Naive thymus-derived CD4-positive, alpha-beta T cell (primary cell): ENCODE measurements at regions of chr10 and their contacts with region 1.

Region 1: GRCh38 chr10:114550756-114551635 is 107.1 kb downstream of the ABLIM1 start:
- DNase-seq: peak in 5 of 9 donors; percentile 33 to 50 (median 40)
- ATAC-seq: peak; percentile 26
- H3K4me3 ChIP-seq: no peak overlapping the region
- H3K4me3 Mint-ChIP-seq: no peak overlapping the region
- H3K27ac ChIP-seq: no peak overlapping the region
- H3K27ac Mint-ChIP-seq: peak overlapping the region in 5 of 9 donors; percentile 1 to 61 (median 20)
- H3K4me1 ChIP-seq: peaks cover 6 to 29% of the 10 kb centered on the region in 2 donors
- H3K4me1 Mint-ChIP-seq: peaks cover 16 to 37% (median 33%) of the 10 kb centered on the region in 7 donors
- H3K27me3 ChIP-seq: no peaks in the 10 kb centered on the region
- H3K27me3 Mint-ChIP-seq: peaks cover 0 to 5% (median 0%) of the 10 kb centered on the region in 5 donors

Region 2: GRCh38 chr10:114337505-114338462 is 213.2 kb before region 1 on chr10:
- CTCF ChIA-PET with region 1: no interaction called
- POLR2A ChIA-PET with region 1: no interaction called
- intact Hi-C with region 1: no loop called
- DNase-seq: no peak
- ATAC-seq: peak; percentile 29
- H3K4me3 ChIP-seq: no peak overlapping the region
- H3K4me3 Mint-ChIP-seq: no peak overlapping the region
- H3K27ac ChIP-seq: no peak overlapping the region
- H3K27ac Mint-ChIP-seq: no peak overlapping the region
- H3K4me1 ChIP-seq: no peaks in the 10 kb centered on the region
- H3K4me1 Mint-ChIP-seq: peaks cover 0 to 31% (median 0%) of the 10 kb centered on the region in 7 donors
- H3K27me3 ChIP-seq: no peaks in the 10 kb centered on the region
- H3K27me3 Mint-ChIP-seq: peaks cover 0 to 6% (median 0%) of the 10 kb centered on the region in 5 donors

Region 3: DNA sequence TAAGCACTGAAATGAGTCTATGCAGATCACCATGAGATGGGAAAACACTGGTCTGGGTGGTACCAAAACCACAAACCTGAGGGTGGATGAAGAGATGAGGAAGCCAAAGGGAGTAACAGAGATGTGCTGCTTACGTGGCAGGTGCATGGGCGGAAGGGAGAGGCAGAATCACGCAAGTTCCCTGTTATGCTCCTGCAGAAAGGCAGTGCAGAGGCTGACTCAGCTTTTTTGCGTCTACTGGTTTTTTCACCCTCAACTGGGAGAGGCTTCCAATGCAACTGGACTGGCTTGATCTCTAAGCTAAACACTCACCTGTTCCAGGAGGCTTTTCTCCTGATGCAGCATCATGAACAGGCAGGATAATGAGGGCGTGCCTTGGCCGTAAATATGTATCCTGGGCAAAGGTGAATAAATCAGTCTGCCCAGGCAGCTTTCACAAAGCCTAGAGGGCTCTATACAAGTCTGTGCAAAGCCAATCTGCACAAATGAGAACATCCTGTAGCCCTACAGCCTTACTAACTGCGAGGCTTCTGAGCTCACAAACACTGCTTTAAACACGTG is 51.3 kb before region 1 on chr10:
- CTCF ChIA-PET with region 1: interaction called, 7 read pairs
- POLR2A ChIA-PET with region 1: interaction called, 13 read pairs
- intact Hi-C with region 1: no loop called
- DNase-seq: peak in 8 of 9 donors; percentile 53 to 73 (median 67)
- ATAC-seq: peak; percentile 66
- H3K4me3 ChIP-seq: peak overlapping the region; percentile 2
- H3K4me3 Mint-ChIP-seq: peak overlapping the region; percentile 69 to 79 (median 74)
- H3K27ac ChIP-seq: peak overlapping the region; percentile 78
- H3K27ac Mint-ChIP-seq: peak overlapping the region; percentile 74 to 96 (median 93)
- H3K4me1 ChIP-seq: peaks cover 12 to 81% of the 10 kb centered on the region in 2 donors
- H3K4me1 Mint-ChIP-seq: peaks cover 57 to 100% (median 93%) of the 10 kb centered on the region in 7 donors
- H3K27me3 ChIP-seq: no peaks in the 10 kb centered on the region
- H3K27me3 Mint-ChIP-seq: no peaks in the 10 kb centered on the region

Region 4: DNA sequence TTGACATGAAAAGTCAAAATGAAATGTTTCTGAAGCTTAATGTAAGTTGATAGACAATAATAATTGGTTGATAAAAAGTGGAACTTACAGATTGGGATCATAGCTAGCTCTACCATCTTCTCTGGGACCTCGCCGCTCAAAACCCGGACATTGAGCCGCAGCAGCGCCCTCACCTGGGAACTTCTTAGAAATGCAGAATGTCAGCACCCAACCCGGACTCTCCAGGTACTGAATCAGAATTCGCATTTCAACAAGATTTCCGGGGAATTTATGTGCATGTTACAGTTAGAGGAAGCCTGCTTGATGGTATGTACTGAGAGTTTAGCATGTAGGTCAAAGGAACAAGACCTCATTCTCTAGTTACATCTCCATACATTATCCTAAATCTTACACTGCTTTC is 143.8 kb after region 1 on chr10:
- CTCF ChIA-PET with region 1: interaction called, 6 read pairs
- POLR2A ChIA-PET with region 1: no interaction called
- intact Hi-C with region 1: loop called (anchors 1 to 2 kb)
- DNase-seq: peak in 3 of 9 donors; percentile 4 to 21 (median 13)
- ATAC-seq: no peak
- H3K4me3 ChIP-seq: no peak overlapping the region
- H3K4me3 Mint-ChIP-seq: no peak overlapping the region
- H3K27ac ChIP-seq: no peak overlapping the region
- H3K27ac Mint-ChIP-seq: no peak overlapping the region
- H3K4me1 ChIP-seq: peaks cover 0 to 9% of the 10 kb centered on the region in 2 donors
- H3K4me1 Mint-ChIP-seq: peaks cover 6 to 11% (median 9%) of the 10 kb centered on the region in 7 donors
- H3K27me3 ChIP-seq: no peaks in the 10 kb centered on the region
- H3K27me3 Mint-ChIP-seq: peaks cover 10 to 32% (median 19%) of the 10 kb centered on the region in 5 donors

Region 5: GRCh38 chr10:114703377-114704107 is 152.5 kb after region 1 on chr10:
- CTCF ChIA-PET with region 1: no interaction called
- POLR2A ChIA-PET with region 1: interaction called, 3 read pairs
- intact Hi-C with region 1: loop called (anchors 1 kb)
- DNase-seq: peak in 7 of 9 donors; percentile 6 to 46 (median 24)
- ATAC-seq: peak; percentile 67
- H3K4me3 ChIP-seq: no peak overlapping the region
- H3K4me3 Mint-ChIP-seq: no peak overlapping the region
- H3K27ac ChIP-seq: no peak overlapping the region
- H3K27ac Mint-ChIP-seq: no peak overlapping the region
- H3K4me1 ChIP-seq: no peaks in the 10 kb centered on the region
- H3K4me1 Mint-ChIP-seq: no peaks in the 10 kb centered on the region
- H3K27me3 ChIP-seq: no peaks in the 10 kb centered on the region
- H3K27me3 Mint-ChIP-seq: peaks cover 0 to 45% (median 9%) of the 10 kb centered on the region in 5 donors

Region 6: DNA sequence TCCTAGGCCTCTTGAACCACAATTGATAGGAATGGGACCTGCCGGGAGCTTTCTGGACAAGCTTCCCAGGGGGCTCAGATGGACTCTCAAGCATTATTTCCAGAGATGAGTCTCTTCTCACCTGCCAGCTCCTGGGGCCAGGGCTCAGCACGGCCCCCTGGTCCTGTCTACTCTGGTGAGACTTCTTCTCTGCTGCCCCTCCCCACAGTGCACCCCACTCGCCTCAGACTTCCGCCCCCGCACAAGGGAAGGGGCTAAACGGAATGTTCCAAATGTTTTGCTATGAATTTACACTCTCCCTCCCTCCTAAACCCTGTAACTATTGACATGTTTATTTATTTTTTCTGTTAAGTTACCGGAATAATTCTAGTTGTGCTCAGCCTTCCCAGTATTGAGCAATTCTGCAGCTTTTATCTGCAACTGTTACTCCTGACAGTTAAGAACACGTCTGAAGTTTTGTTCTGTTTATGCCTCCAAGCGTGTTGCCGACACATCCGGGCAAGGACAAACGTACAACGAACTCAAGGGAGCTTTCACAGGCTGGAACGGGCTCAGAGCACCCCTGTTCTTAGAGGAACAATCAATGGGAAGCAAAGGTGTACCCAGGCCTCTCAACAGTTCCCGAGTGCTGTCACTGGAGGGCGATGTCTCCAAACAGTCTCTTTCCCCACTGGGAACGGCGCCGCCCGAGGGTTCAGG is 325.8 kb after region 1 on chr10:
- CTCF ChIA-PET with region 1: no interaction called
- POLR2A ChIA-PET with region 1: no interaction called
- intact Hi-C with region 1: loop called in 1 of 2 experiments (anchors 1 kb)
- DNase-seq: peak in 2 of 9 donors; percentile 2 to 55
- ATAC-seq: peak; percentile 63
- H3K4me3 ChIP-seq: no peak overlapping the region
- H3K4me3 Mint-ChIP-seq: no peak overlapping the region
- H3K27ac ChIP-seq: no peak overlapping the region
- H3K27ac Mint-ChIP-seq: no peak overlapping the region
- H3K4me1 ChIP-seq: no peaks in the 10 kb centered on the region
- H3K4me1 Mint-ChIP-seq: peaks cover 0 to 30% (median 12%) of the 10 kb centered on the region in 7 donors
- H3K27me3 ChIP-seq: peaks cover 0 to 5% of the 10 kb centered on the region in 2 donors
- H3K27me3 Mint-ChIP-seq: peaks cover 36 to 76% (median 44%) of the 10 kb centered on the region in 5 donors

Region 7: GRCh38 chr10:115129752-115130151 is 578.8 kb after region 1 on chr10:
- CTCF ChIA-PET with region 1: no interaction called
- POLR2A ChIA-PET with region 1: no interaction called
- intact Hi-C with region 1: loop called in 1 of 2 experiments (anchors 1 kb)
- DNase-seq: peak in 4 of 9 donors; percentile 2 to 14 (median 6)
- ATAC-seq: no peak
- H3K4me3 ChIP-seq: no peak overlapping the region
- H3K4me3 Mint-ChIP-seq: no peak overlapping the region
- H3K27ac ChIP-seq: no peak overlapping the region
- H3K27ac Mint-ChIP-seq: no peak overlapping the region
- H3K4me1 ChIP-seq: no peaks in the 10 kb centered on the region
- H3K4me1 Mint-ChIP-seq: no peaks in the 10 kb centered on the region
- H3K27me3 ChIP-seq: no peaks in the 10 kb centered on the region
- H3K27me3 Mint-ChIP-seq: peaks cover 1 to 18% (median 12%) of the 10 kb centered on the region in 5 donors

Region 8: GRCh38 chr10:115665549-115665948 is 1114.6 kb after region 1 on chr10:
- CTCF ChIA-PET with region 1: no interaction called
- POLR2A ChIA-PET with region 1: no interaction called
- intact Hi-C with region 1: no loop called
- DNase-seq: no peak
- ATAC-seq: no peak
- H3K4me3 ChIP-seq: no peak overlapping the region
- H3K4me3 Mint-ChIP-seq: no peak overlapping the region
- H3K27ac ChIP-seq: no peak overlapping the region
- H3K27ac Mint-ChIP-seq: no peak overlapping the region
- H3K4me1 ChIP-seq: no peaks in the 10 kb centered on the region
- H3K4me1 Mint-ChIP-seq: no peaks in the 10 kb centered on the region
- H3K27me3 ChIP-seq: no peaks in the 10 kb centered on the region
- H3K27me3 Mint-ChIP-seq: no peaks in the 10 kb centered on the region